RWPE1 (cell line): ENCODE measurements at regions of chr10 and their contacts with region 1.

Region 1: DNA sequence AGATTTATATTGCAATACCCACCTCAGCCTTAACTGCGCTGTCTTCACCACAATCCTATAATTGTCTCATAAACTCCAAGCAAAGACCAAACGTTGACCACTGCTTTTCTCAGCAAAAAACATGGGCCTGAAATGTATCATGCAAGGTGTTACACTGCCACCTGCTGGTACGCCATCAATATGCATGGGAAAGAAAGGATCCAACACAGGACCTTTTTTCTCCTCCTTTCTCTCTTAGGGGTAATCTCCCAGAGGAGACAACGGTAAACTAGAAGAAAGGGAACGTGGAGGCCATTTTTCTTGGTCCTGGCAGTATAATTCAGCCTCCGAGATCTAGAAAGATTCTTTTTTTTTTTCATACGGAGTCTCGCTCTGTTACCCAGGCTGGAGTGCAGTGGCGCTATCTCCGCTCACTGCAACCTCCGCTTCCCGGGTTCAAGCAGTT is 79.1 kb upstream of the MPP7 start:
- DNase-seq: peak; percentile 67
- H3K27ac ChIP-seq: peak overlapping the region; percentile 62
- CTCF ChIP-seq: peak; percentile 93

Region 2: DNA sequence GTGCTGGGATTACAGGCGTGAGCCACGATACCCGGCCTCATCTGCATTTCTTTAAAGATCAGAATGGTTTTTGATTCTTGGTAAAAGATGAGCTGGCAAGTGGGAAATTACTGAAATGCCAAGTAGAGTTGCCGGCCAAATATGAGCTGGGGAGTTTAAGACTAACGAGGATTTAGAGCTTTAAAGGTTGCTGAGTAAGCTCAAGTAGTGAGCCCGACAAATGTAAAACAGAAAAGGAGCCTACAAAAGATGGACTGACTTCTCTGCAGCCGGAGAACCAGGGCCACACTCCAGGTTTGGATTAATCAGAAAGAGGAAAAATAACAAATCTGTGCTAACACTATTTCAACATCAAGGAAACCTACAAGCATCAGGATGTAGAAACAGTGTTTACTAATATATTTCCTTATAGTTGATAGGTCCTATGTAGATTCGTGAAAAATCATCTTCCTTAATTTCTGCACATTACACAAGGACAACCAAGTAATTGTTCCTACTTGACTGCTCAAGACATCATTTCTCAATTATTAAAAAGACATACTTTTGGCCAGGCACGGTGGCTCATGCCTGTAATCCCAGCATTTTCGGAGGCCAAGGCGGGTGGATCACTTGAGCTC is 128.6 kb before region 1 on chr10:
- CTCF ChIA-PET with region 1: interaction called, 5 read pairs
- POLR2A ChIA-PET with region 1: interaction called, 11 read pairs
- DNase-seq: no peak
- H3K27ac ChIP-seq: peak overlapping the region; percentile 82
- CTCF ChIP-seq: no peak

Region 3: GRCh38 chr10:28302638-28303488 is 79.1 kb before region 1 on chr10 and contains the start of gene MPP7:
- CTCF ChIA-PET with region 1: interaction called, 18 read pairs
- POLR2A ChIA-PET with region 1: no interaction called
- DNase-seq: peak; percentile 98
- H3K27ac ChIP-seq: peak within 1 kb of the TSS; percentile 78
- CTCF ChIP-seq: peak; percentile 63

Region 4: DNA sequence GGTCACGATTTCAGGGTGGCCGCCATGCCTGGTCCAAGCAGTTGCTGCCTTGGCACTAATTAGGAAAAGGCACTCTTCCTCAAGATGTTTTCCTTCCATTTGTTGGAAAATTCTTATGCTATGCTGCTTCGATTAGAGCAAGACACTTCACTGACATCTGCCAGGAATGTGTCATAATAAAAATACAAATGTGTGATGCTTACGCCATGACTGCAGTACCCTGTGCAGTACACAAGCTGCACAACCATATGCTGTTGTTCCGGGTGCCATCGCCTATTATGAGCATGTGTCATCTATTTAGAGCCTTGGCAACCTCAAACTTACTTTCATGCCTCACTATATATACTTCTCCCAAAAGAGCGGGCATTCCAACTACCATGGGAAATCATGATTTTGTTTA is 64.2 kb before region 1 on chr10:
- CTCF ChIA-PET with region 1: no interaction called
- POLR2A ChIA-PET with region 1: no interaction called
- DNase-seq: no peak
- H3K27ac ChIP-seq: no peak overlapping the region
- CTCF ChIP-seq: no peak